ENCODE measurements at regions of chr2 and their contacts with region 1.

Region 1: GRCh38 chr2:174395284-174395968 is at the start of gene SCRN3:
- DNase-seq: peak; percentile 91
- total RNA-seq, gene SCRN3: 39.4 TPM

Region 2: GRCh38 chr2:174138161-174138560 is 257.3 kb before region 1 on chr2:
- intact Hi-C with region 1: no loop called
- DNase-seq: no peak

Region 3: GRCh38 chr2:174282441-174282840 is 113.0 kb before region 1 on chr2:
- intact Hi-C with region 1: no loop called
- DNase-seq: no peak

Region 4: DNA sequence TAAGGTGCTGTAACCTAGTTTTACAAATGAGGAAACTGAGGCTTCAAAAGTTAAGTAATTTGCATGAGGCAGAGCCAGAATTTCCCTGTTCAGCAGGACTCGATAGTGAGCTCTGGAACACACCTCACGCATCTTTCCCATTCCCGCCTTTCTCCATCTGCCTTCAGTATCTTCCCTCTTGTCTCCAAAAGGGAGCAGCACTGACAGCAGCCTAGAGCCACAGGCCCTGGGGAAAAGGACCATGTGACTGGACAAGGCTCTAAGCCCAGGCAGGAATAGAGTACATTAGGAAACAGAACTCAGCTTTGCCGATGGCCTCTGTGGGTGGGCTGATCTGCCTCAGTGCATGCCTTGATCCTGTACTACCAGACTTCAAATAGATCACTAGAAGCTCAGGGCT is 69.9 kb after region 1 on chr2:
- intact Hi-C with region 1: no loop called
- DNase-seq: no peak

Region 5: DNA sequence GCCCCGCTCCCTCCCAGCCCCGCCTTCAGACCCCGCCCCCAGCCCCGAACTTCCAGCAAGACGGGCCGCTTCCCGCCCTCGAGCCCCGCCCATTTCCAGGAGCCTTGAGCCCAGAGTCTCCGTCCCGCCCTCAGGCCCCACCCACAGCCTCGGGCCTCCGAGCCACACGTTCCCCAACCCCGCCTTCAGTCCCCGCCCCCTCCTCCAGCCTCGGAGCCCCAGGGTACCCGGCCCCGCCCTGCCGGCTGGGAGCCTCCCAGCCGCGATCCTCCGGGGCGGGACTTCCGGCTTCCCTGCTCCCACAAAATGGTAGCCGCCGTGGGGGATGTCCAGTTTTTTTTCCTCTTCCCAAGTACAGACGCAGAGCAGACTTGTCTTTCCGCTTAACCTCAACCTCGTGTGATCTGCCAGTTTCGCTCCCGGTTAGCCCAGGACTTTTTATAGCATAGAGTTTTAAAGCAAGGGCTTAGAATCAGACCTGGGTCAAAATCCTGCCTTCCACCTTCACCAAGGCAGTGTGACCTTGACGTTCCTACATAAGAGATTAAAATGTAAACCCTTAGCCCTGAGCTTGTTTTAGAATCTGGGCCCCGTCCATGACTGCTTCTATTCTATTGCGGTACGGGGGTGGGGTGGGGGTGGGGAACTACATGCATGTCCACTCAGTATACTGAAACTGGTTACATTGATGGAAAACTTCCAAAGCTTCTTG is 91.8 kb after region 1 on chr2:
- intact Hi-C with region 1: loop called (anchors 5 kb)
- DNase-seq: peak; percentile 100